PC-3 (cell line): ENCODE measurements at regions of chr12 and their contacts with region 1.

Region 1: GRCh38 chr12:47307680-47308399 is 228.1 kb upstream of the AMIGO2 start:
- DNase-seq: peak; percentile 84
- ATAC-seq: peak; percentile 100
- H3K4me3 ChIP-seq: no peak overlapping the region
- H3K27ac ChIP-seq: no peak overlapping the region
- H3K4me1 ChIP-seq: peaks cover 8% of the 10 kb centered on the region; the same call in 1 of the 2 replicates
- H3K27me3 ChIP-seq: no peaks in the 10 kb centered on the region
- CTCF ChIP-seq: peak; percentile 94

Region 2: DNA sequence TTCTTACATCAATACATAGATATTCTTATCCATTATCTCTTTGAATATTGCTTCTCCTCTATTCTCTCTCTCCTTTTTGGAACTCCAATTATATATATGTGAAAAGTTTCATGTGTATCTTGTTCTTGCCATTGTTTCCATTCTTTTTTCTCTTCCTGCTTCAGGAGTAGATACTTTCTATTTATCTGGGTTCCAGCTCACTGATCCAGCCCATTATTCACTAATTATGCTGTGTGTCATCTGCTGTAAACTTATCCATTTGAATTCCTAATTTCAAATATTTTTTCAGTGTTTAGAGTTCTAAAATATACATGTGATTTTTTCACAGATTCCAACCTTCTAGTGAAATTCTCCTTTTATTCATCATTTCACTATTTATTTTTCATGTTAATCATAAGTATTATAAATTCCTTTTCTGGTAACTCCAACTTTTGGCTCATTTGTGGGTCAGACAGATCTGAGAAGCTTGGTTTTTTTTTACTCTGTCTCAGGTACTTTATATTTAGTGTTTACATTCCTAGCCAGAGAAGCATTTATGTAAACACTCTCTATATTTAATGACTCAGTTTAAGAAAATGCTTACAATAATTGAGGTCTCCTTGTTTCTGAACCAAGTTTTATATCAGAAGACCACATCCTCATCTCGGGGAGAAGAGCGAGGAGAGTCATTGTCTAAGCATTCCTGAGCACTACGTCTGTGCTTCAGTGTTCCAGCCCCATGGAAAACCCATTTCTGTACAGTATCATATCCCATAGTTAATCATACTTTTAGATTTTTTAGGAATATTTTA is 212.2 kb before region 1 on chr12:
- CTCF ChIA-PET with region 1: no interaction called
- POLR2A ChIA-PET with region 1: no interaction called
- intact Hi-C with region 1: loop called (anchors 5 kb)
- DNase-seq: peak; percentile 92
- ATAC-seq: peak; percentile 87
- H3K4me3 ChIP-seq: peak overlapping the region; percentile 36
- H3K27ac ChIP-seq: peak overlapping the region; percentile 61
- H3K4me1 ChIP-seq: peaks cover 54% of the 10 kb centered on the region
- H3K27me3 ChIP-seq: no peaks in the 10 kb centered on the region
- CTCF ChIP-seq: no peak

Region 3: GRCh38 chr12:47216150-47216677 is 91.6 kb before region 1 on chr12:
- CTCF ChIA-PET with region 1: no interaction called
- POLR2A ChIA-PET with region 1: no interaction called
- intact Hi-C with region 1: loop called (anchors 5 kb)
- DNase-seq: no peak
- ATAC-seq: no peak
- H3K4me3 ChIP-seq: no peak overlapping the region
- H3K27ac ChIP-seq: no peak overlapping the region; the same call in 1 of the 2 replicates
- H3K4me1 ChIP-seq: peaks cover 44% of the 10 kb centered on the region
- H3K27me3 ChIP-seq: no peaks in the 10 kb centered on the region
- CTCF ChIP-seq: no peak

Region 4: DNA sequence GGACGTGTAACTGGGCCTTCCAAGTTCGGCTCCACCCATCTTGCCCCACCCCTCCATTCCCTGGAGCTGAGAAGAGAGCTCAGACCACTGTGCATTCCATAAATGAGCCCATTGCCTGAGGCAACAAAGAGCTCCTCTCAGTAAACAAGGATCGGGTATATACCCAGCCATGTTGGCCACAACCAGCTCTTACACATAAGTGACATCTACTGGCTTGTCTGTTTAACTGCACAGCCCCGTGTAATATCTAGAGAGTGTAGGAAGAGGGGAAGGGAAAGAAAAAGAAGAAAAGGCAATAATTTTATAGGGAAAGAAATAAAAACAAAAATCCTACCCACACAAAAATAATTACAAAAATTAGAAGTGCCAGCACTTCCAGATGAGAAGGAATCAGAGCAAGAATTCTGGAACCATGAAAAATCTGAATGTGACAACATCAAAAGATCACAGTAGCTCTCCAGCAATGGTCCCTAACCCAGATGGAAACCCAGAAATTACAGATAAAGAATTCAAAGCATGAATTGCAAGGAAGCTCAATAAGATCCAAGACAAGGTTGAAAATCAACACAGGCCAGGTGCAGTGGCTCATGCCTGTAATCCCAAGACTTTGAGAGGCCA is 89.9 kb after region 1 on chr12:
- CTCF ChIA-PET with region 1: no interaction called
- POLR2A ChIA-PET with region 1: no interaction called
- intact Hi-C with region 1: loop called (anchors 2 kb)
- DNase-seq: peak; percentile 94
- ATAC-seq: peak; percentile 88
- H3K4me3 ChIP-seq: no peak overlapping the region
- H3K27ac ChIP-seq: no peak overlapping the region
- H3K4me1 ChIP-seq: peaks cover 25% of the 10 kb centered on the region
- H3K27me3 ChIP-seq: no peaks in the 10 kb centered on the region
- CTCF ChIP-seq: peak; percentile 93